Spleen (tissue), 13 donors: ENCODE measurements at regions of chr20 and their contacts with region 1.

Region 1: DNA sequence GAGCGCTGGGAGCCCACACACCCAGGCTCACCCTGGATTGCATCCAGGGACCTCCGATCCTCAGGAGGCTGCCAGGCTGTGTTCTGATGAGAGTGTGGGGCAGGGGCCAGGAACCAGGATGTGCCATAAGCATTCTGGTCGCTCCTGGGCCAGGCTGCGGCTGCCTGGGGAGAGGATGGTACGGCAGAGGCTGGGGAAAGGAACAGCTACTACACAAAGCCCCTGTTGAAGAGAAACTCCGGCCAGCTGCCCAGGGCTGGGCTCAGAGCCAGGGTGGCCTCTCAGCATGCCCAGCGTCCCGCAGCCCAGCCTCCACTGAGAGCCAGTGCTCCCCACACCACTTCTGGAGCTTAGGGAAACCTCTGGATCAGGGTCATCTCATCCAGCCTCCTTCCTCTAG is 21.7 kb upstream of the OCSTAMP start:
- DNase-seq: no peak
- H3K4me3 ChIP-seq: no peak overlapping the region
- H3K27ac ChIP-seq: no peak overlapping the region
- H3K4me1 ChIP-seq: peaks cover 0 to 26% (median 13%) of the 10 kb centered on the region in 6 donors
- H3K27me3 ChIP-seq: peaks cover 0 to 54% (median 0%) of the 10 kb centered on the region in 7 donors
- CTCF ChIP-seq: no peak
- POLR2A ChIP-seq: no peak

Region 2: GRCh38 chr20:46477225-46477624 is 94.9 kb before region 1 on chr20:
- intact Hi-C with region 1: no loop called
- DNase-seq: no peak
- H3K4me3 ChIP-seq: no peak overlapping the region
- H3K27ac ChIP-seq: no peak overlapping the region
- H3K4me1 ChIP-seq: no peaks in the 10 kb centered on the region
- H3K27me3 ChIP-seq: no peaks in the 10 kb centered on the region
- CTCF ChIP-seq: no peak
- POLR2A ChIP-seq: no peak

Region 3: DNA sequence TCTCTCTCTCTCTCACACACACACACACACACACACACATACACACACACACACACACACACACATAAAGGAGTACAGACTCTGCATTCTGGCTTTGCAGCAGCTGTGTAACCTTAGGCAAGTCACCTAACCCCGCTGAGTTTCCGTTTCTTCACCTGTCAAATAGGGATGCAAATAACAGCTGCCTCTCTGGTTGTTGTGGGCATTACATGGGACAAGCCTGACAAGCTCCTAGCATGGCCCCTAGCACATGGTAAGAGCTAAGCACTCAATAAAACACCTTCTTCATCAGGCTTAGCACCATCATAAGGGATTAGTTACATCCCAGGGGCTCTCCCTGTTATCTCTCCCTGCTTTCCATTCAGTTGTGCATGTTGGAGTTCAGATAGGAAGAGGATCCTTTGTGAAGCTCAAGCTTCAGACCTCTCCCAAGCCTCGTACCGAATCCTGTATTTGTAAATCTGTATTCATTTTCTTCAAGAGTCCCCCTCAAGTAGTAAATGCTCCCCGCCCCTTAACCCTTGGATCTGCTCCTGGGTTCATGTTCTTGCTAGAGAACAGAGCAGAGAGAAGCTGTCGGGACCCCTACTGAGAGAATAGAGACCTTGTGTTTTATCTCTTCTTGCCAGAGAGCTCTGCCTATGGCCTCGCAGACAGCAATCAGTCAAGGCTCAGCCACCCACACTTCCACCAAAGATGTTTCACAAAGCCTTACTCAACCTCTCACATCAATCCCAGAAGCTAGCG is 76.9 kb after region 1 on chr20:
- intact Hi-C with region 1: no loop called
- DNase-seq: no peak
- H3K4me3 ChIP-seq: no peak overlapping the region
- H3K27ac ChIP-seq: no peak overlapping the region
- H3K4me1 ChIP-seq: no peaks in the 10 kb centered on the region
- H3K27me3 ChIP-seq: peaks cover 0 to 48% (median 13%) of the 10 kb centered on the region in 7 donors
- CTCF ChIP-seq: no peak
- POLR2A ChIP-seq: no peak

Region 4: GRCh38 chr20:46674253-46675083 is 102.3 kb after region 1 on chr20:
- intact Hi-C with region 1: loop called (anchors 5 kb)
- DNase-seq: no peak
- H3K4me3 ChIP-seq: no peak overlapping the region
- H3K27ac ChIP-seq: no peak overlapping the region
- H3K4me1 ChIP-seq: peaks cover 0 to 11% (median 2%) of the 10 kb centered on the region in 6 donors
- H3K27me3 ChIP-seq: no peaks in the 10 kb centered on the region
- CTCF ChIP-seq: no peak
- POLR2A ChIP-seq: no peak